ENCODE measurements at regions of chr22 and their contacts with region 1.

Region 1: GRCh38 chr22:28594797-28595462 is 84.7 kb downstream of the TTC28 start:
- DNase-seq: no peak
- ATAC-seq: peak; percentile 83 to 91
- H3K4me3 ChIP-seq: no peak overlapping the region
- H3K27ac ChIP-seq: no peak overlapping the region
- H3K4me1 ChIP-seq: no peaks in the 10 kb centered on the region
- H3K27me3 ChIP-seq: no peaks in the 10 kb centered on the region

Region 2: DNA sequence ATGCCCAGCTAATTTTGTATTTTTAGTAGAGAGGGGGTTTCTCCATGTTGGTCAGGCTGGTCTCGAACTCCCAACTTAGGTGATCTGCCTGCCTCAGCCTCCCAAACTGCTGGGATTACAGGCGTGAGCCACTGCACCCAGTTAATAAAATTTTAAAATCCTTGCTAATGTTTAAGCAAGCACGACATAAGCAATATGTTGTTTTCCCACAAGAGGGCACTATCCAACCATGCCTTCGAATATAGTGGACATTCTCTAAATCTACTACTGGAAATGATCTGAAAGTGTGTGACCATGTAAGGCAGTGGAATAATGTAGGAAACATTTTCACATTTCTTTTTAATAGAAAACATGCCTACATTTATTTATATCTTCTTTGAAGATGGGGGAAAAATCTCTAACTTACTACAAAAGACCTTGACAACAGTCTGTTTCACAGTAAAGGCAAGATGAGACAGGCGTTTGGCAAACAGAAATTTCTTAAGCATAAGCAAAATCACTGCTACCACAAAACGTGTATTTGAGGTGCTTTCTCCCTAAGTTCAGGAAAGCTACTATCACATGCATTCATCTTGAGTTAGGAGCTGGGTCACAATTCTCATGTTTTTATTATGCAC is 714.0 kb before region 1 on chr22:
- intact Hi-C with region 1: loop called in 1 of 4 experiments (anchors 10 kb)
- DNase-seq: no peak
- ATAC-seq: peak; percentile 80 to 84
- H3K4me3 ChIP-seq: no peak overlapping the region
- H3K27ac ChIP-seq: peak overlapping the region; percentile 81
- H3K4me1 ChIP-seq: peaks cover 6% of the 10 kb centered on the region
- H3K27me3 ChIP-seq: no peaks in the 10 kb centered on the region

Region 3: GRCh38 chr22:28019881-28020871 is 574.8 kb before region 1 on chr22:
- intact Hi-C with region 1: loop called in 3 of 4 experiments (anchors 5 to 10 kb)
- DNase-seq: peak; percentile 74 to 90 (median 87)
- ATAC-seq: peak; percentile 65 to 79
- H3K4me3 ChIP-seq: no peak overlapping the region
- H3K27ac ChIP-seq: no peak overlapping the region
- H3K4me1 ChIP-seq: peaks cover 13% of the 10 kb centered on the region
- H3K27me3 ChIP-seq: no peaks in the 10 kb centered on the region

Region 4: GRCh38 chr22:28044546-28045173 is 550.3 kb before region 1 on chr22:
- intact Hi-C with region 1: loop called in 1 of 4 experiments (anchors 5 kb)
- DNase-seq: no peak
- ATAC-seq: no peak
- H3K4me3 ChIP-seq: no peak overlapping the region
- H3K27ac ChIP-seq: no peak overlapping the region
- H3K4me1 ChIP-seq: peaks cover 8% of the 10 kb centered on the region
- H3K27me3 ChIP-seq: no peaks in the 10 kb centered on the region

Region 5: GRCh38 chr22:28051787-28052356 is 543.1 kb before region 1 on chr22:
- intact Hi-C with region 1: loop called (anchors 5 to 10 kb)
- DNase-seq: peak; percentile 71 to 91 (median 88)
- ATAC-seq: peak in 1 of 2 donors; percentile 67
- H3K4me3 ChIP-seq: no peak overlapping the region
- H3K27ac ChIP-seq: no peak overlapping the region
- H3K4me1 ChIP-seq: peaks cover 6% of the 10 kb centered on the region
- H3K27me3 ChIP-seq: no peaks in the 10 kb centered on the region

Region 6: GRCh38 chr22:28538922-28539321 is 56.0 kb before region 1 on chr22:
- intact Hi-C with region 1: no loop called
- DNase-seq: no peak
- ATAC-seq: no peak
- H3K4me3 ChIP-seq: no peak overlapping the region
- H3K27ac ChIP-seq: no peak overlapping the region
- H3K4me1 ChIP-seq: no peaks in the 10 kb centered on the region
- H3K27me3 ChIP-seq: no peaks in the 10 kb centered on the region